ENCODE measurements at regions of chr1 and their contacts with region 1.

Region 1: DNA sequence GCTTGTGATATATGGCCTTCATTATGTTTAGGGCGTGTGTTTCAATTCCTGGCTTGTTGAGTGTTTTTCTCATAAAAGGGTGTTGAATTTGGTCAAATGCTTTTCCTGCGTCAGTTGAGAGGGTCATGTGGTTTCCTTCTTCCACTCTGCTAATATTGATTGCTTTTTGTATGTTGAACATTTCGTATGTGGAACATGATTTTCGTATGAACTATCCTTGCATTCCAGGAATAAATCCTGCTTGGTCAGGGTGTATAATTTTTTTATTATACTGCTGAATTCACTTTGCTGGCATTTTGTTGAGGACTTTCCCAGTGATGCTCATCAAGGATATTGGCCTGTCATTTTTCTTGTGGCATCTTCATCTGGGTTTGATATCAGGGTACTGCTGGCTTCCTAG is 4.7 kb upstream of the ATAD3A start:
- DNase-seq: no peak
- ATAC-seq: no peak

Region 2: DNA sequence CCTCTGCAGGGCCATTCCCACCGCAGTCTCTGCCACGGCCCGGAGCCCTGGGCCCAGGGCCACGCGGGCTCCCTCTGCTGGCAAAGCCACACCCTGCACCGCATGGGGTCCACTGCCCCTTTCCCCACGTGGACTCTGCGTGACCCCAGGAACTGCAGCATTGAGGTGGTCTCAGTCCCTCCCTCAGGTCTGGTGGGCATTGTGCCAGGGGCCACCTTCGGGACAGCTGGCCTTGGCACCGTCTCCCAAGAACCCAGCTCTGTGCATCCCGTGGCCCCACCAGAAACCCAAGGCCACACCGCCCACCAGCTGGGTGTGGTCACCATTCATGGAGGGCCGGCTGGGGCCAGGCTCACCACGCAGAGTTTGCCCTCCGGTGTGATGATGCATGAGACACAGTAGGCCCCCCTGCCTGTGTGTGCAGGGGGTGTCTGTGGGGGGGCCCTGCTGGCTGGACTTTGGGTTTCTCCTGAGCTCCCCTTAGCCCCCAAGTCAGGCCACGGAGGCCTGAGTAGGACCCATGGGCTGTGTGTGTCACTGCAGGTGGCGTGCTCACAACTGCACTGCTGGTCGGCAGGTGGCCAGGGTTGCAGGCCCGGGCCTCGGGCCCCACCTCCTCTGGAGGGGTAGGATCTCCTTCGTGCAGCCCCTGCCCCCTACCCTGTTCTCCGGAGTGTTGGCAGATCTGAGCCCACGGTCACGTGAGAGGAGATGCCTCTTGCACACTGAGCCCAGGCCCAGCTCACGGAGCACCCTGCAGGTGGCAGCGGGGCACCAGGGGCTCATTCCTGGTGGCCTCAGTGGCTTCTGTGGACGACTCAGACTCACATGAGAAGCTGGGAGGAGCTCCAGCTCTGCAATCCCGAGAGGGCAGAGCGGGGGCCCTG is 66.1 kb before region 1 on chr1:
- intact Hi-C with region 1: loop called in 1 of 2 experiments (anchors 5 kb)
- DNase-seq: peak; percentile 31 to 65
- ATAC-seq: peak; percentile 62

Region 3: GRCh38 chr1:1619917-1620785 is 112.8 kb after region 1 on chr1:
- intact Hi-C with region 1: no loop called
- DNase-seq: peak in 1 of 2 donors; percentile 24
- ATAC-seq: no peak

Measured in left colon (tissue), 2 donors.